ENCODE measurements at regions of chr7 and their contacts with region 1.

Region 1: GRCh38 chr7:24665564-24666294 is 91.5 kb downstream of the GSDME start:
- DNase-seq: no peak
- ATAC-seq: peak; percentile 44

Region 2: DNA sequence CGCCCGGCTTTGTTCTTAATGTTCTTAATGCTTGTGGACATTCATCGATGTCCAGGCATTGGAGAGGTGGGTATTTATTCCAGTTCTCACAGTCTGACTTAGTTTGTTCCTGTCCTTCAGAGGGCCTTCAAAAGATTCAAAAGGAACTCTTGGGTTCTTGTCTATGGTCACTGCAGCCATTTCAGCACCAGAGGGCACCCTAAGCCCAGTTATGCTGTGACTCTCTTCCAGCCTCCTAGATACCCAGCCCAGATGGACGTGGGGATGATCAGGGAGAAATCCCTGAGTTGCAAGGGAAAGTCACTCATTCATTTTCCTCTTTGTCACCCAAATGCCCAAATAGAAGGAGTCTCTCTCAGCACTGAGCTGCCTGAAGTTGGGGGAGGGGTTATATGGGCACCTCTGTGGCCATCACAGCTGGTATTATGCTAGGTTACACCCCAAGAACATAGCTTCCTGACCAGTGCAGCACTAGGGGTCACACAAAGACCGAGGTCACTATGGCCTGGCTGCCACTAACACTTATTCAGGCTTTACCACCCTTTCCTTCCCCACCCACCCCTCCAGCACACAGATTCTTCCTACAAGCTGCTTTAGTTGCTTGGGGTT is 1095.0 kb before region 1 on chr7:
- intact Hi-C with region 1: loop called (anchors 5 kb)
- DNase-seq: peak; percentile 73
- ATAC-seq: peak; percentile 93

Region 3: DNA sequence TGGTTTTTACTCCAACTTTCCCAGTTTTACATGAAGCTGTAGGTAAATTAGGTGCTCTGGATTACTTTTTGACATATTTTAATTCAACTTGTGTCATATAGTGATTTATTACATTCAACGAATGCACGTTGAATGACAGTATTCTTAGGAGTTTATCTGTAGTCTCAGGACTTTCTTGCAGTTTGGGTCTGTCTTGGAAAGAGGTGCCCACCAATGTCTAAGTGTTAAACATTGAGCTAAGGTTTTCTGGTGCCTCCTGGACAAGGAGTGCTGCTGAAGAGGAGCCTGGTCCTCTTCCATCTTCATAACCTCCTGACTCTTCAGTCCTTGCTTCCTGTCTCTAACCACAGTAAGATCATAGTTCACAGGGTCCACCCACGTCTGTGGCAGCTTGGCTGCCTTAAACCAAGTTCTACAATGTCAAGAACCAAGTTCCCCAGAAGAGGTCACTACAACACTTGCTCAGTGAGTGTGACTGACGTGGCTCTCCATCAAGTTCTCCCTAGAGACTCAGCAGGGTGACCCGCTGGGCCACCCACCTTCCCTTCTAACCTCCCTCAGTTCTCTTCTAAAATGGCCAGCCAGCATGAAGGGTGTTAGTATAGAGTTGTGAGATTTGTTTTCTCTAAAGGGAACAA is 375.6 kb before region 1 on chr7:
- intact Hi-C with region 1: loop called (anchors 10 kb)
- DNase-seq: no peak
- ATAC-seq: no peak